B cell (primary cell): ENCODE measurements at regions of chr14 and their contacts with region 1.

Region 1: GRCh38 chr14:53109105-53110041 is 43.8 kb downstream of the DDHD1 start:
- DNase-seq: peak; percentile 76
- ATAC-seq: peak; percentile 31
- H3K4me3 ChIP-seq: peak overlapping the region; percentile 28 to 69 (median 61)
- H3K4me3 Mint-ChIP-seq: no peak overlapping the region
- H3K27ac ChIP-seq: peak overlapping the region; percentile 80 to 81
- H3K27ac Mint-ChIP-seq: no peak overlapping the region
- H3K4me1 ChIP-seq: peaks cover 15 to 26% of the 10 kb centered on the region in 2 donors
- H3K4me1 Mint-ChIP-seq: peaks cover 2% of the 10 kb centered on the region
- H3K27me3 ChIP-seq: no peaks in the 10 kb centered on the region
- H3K27me3 Mint-ChIP-seq: no peaks in the 10 kb centered on the region
- CTCF ChIP-seq: no peak

Region 2: DNA sequence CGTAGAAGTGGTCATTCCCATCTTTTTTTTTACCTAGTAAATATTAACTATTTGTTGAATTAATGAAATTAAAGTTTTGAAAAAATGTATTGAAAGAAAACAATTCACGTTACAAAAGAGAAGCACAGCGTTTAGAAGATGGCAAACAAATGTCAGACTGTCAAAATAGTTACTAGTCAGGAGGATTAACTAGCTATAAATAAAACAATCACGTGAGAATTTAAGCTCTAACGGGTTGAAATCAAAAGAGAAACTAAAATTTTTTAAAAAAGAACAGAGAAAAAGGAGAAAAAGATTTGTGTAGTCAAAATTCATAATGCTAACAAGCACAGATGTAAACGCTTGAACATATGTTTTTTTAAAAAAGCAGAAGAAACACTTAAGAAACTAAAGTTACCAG is 17.4 kb after region 1 on chr14:
- CTCF ChIA-PET with region 1: no interaction called
- POLR2A ChIA-PET with region 1: interaction called, 3 read pairs
- intact Hi-C with region 1: loop called (anchors 2 kb)
- DNase-seq: peak; percentile 54
- ATAC-seq: peak; percentile 17
- H3K4me3 ChIP-seq: peak overlapping the region in 4 of 5 experiments; percentile 4 to 35 (median 34)
- H3K4me3 Mint-ChIP-seq: peak overlapping the region; percentile 81
- H3K27ac ChIP-seq: peak overlapping the region; percentile 83 to 91
- H3K27ac Mint-ChIP-seq: peak overlapping the region; percentile 80
- H3K4me1 ChIP-seq: peaks cover 18 to 23% of the 10 kb centered on the region in 2 donors
- H3K4me1 Mint-ChIP-seq: peaks cover 17% of the 10 kb centered on the region
- H3K27me3 ChIP-seq: no peaks in the 10 kb centered on the region
- H3K27me3 Mint-ChIP-seq: no peaks in the 10 kb centered on the region
- CTCF ChIP-seq: no peak

Region 3: DNA sequence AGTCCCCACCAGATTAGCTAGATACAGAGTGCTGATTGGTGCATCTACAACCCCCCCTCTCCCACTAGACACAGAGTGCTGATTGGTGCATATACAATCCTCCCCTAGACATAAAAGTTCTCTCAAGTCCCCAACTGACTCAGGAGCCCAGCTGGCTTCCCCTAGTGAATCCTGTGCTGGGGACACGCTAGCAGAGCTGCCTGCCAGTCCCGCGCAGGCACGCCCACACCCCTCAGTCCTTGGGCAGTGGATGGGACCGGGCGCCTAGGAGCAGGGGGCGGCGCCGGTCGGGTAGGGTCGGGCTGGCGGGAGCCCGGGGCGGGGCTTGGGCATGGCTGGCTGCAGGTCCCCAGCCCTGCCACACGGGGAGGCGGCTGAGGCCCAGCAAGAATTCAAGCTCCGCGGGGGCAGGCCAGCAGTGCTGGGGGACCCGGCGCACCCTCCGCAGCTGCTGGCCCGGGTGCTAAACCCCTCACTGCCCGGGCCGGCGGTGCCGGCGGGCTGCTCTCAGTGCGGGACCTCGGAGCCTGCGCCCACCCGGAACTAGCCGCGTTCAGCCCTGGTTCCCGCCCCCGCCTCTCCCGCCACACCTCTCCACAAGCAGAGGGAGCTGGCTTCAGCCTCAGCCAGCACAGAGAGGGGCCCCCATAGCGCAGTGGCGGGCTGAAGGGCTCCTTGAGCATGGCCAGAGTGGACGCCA is 108.1 kb after region 1 on chr14:
- CTCF ChIA-PET with region 1: no interaction called
- POLR2A ChIA-PET with region 1: no interaction called
- intact Hi-C with region 1: loop called (anchors 10 kb)
- DNase-seq: peak; percentile 82
- ATAC-seq: peak; percentile 98
- H3K4me3 ChIP-seq: peak overlapping the region in 4 of 5 experiments; percentile 48 to 68 (median 63)
- H3K4me3 Mint-ChIP-seq: peak overlapping the region; percentile 93
- H3K27ac ChIP-seq: peak overlapping the region in 1 of 2 donors; percentile 2
- H3K27ac Mint-ChIP-seq: peak overlapping the region; percentile 86
- H3K4me1 ChIP-seq: peaks cover 6 to 8% of the 10 kb centered on the region in 2 donors
- H3K4me1 Mint-ChIP-seq: peaks cover 8% of the 10 kb centered on the region
- H3K27me3 ChIP-seq: no peaks in the 10 kb centered on the region
- H3K27me3 Mint-ChIP-seq: no peaks in the 10 kb centered on the region
- CTCF ChIP-seq: peak; percentile 65